Caco-2 (cell line): ENCODE measurements at regions of chr7 and their contacts with region 1.

Region 1: GRCh38 chr7:137169282-137169698 is 174.2 kb downstream of the PTN start:
- DNase-seq: peak; percentile 60 to 62
- H3K4me3 ChIP-seq: no peak overlapping the region
- H3K4me3 Mint-ChIP-seq: no peak overlapping the region
- H3K27ac Mint-ChIP-seq: no peak overlapping the region
- H3K4me1 ChIP-seq: no peaks in the 10 kb centered on the region
- H3K4me1 Mint-ChIP-seq: no peaks in the 10 kb centered on the region
- H3K27me3 ChIP-seq: no peaks in the 10 kb centered on the region
- H3K27me3 Mint-ChIP-seq: peaks cover 5% of the 10 kb centered on the region
- CTCF ChIP-seq: peak; percentile 64 to 84

Region 2: GRCh38 chr7:137120690-137121089 is 48.6 kb before region 1 on chr7:
- CTCF ChIA-PET with region 1: no interaction called
- POLR2A ChIA-PET with region 1: no interaction called
- intact Hi-C with region 1: no loop called
- DNase-seq: no peak
- H3K4me3 ChIP-seq: no peak overlapping the region
- H3K4me3 Mint-ChIP-seq: no peak overlapping the region
- H3K27ac Mint-ChIP-seq: no peak overlapping the region
- H3K4me1 ChIP-seq: no peaks in the 10 kb centered on the region
- H3K4me1 Mint-ChIP-seq: no peaks in the 10 kb centered on the region
- H3K27me3 ChIP-seq: no peaks in the 10 kb centered on the region
- H3K27me3 Mint-ChIP-seq: no peaks in the 10 kb centered on the region
- CTCF ChIP-seq: no peak

Region 3: DNA sequence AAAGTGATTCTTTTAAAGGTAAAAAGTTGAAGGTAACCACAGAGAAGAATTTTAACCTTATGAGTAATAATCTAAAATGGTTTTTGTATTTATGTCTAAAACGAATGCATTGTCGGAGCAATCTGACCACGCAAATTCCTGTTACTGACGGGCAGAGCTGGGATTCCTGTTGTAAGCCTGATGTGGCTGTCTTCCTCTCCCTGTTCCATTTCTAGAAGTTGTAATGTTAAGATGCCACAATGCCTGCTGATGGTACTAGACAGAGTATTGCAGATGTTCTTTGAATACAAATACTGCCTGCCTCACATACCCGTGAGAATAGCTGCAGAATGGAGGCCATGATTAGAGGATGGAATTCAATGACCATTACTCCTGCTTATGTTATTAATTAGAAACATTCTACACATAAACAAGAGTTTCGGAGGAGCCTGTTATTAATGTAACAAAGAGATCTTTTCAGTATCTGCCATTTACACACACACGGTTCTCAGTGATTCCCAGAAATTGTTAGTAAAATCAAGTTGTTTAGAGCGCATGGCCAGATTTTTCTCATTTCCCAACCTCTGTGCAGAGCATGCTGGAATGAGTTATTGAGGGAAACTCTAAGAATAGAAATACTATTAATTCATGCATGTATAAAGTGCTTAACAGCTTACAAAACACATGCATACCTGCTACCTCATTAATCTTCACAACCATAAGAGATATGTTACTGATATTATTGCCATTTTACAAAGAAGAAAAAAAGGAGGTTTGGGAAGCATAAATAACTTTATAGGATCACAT is 22.5 kb before region 1 on chr7:
- CTCF ChIA-PET with region 1: no interaction called
- POLR2A ChIA-PET with region 1: no interaction called
- intact Hi-C with region 1: no loop called
- DNase-seq: no peak
- H3K4me3 ChIP-seq: no peak overlapping the region
- H3K4me3 Mint-ChIP-seq: no peak overlapping the region
- H3K27ac Mint-ChIP-seq: no peak overlapping the region
- H3K4me1 ChIP-seq: no peaks in the 10 kb centered on the region
- H3K4me1 Mint-ChIP-seq: no peaks in the 10 kb centered on the region
- H3K27me3 ChIP-seq: no peaks in the 10 kb centered on the region
- H3K27me3 Mint-ChIP-seq: peaks cover 2% of the 10 kb centered on the region
- CTCF ChIP-seq: no peak

Region 4: GRCh38 chr7:137337902-137338301 is 168.6 kb after region 1 on chr7:
- CTCF ChIA-PET with region 1: interaction called, 11 read pairs
- POLR2A ChIA-PET with region 1: no interaction called
- intact Hi-C with region 1: loop called (anchors 1 kb)
- DNase-seq: peak in 1 of 2 experiments; percentile 2
- H3K4me3 ChIP-seq: no peak overlapping the region
- H3K4me3 Mint-ChIP-seq: no peak overlapping the region
- H3K27ac Mint-ChIP-seq: no peak overlapping the region
- H3K4me1 ChIP-seq: no peaks in the 10 kb centered on the region
- H3K4me1 Mint-ChIP-seq: no peaks in the 10 kb centered on the region
- H3K27me3 ChIP-seq: no peaks in the 10 kb centered on the region
- H3K27me3 Mint-ChIP-seq: peaks cover 2% of the 10 kb centered on the region
- CTCF ChIP-seq: peak; percentile 9 to 26

Region 5: DNA sequence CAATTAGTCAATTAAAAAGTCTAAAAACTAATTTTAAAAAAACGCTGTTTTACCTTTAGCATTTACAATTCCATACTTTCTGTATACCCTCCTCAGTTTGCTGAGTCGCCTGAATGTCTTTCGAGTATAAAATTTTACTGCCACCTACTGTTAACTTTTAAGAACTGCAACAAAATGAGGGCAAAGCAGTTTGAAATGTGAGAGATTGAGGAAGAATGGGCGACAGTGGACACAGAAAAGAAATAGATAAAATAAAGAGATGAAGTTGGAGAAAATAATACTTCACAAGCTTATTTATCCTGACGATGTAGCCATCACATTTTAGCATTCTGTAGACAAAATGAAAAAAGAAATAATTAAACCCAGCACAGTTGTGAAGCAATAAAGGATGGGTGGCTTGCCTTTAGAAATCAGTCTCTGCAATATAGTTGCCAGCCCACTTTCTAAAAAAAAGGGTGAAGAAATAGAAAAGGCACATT is 285.0 kb after region 1 on chr7:
- CTCF ChIA-PET with region 1: interaction called, 11 read pairs
- POLR2A ChIA-PET with region 1: no interaction called
- intact Hi-C with region 1: loop called (anchors 1 kb)
- DNase-seq: peak in 1 of 2 experiments; percentile 43
- H3K4me3 ChIP-seq: no peak overlapping the region
- H3K4me3 Mint-ChIP-seq: no peak overlapping the region
- H3K27ac Mint-ChIP-seq: no peak overlapping the region
- H3K4me1 ChIP-seq: no peaks in the 10 kb centered on the region
- H3K4me1 Mint-ChIP-seq: no peaks in the 10 kb centered on the region
- H3K27me3 ChIP-seq: no peaks in the 10 kb centered on the region
- H3K27me3 Mint-ChIP-seq: peaks cover 10% of the 10 kb centered on the region
- CTCF ChIP-seq: peak; percentile 54 to 61

Region 6: GRCh38 chr7:137592232-137592896 is 423.1 kb after region 1 on chr7:
- CTCF ChIA-PET with region 1: interaction called, 8 read pairs
- POLR2A ChIA-PET with region 1: no interaction called
- intact Hi-C with region 1: loop called (anchors 1 kb)
- DNase-seq: peak; percentile 59 to 68
- H3K4me3 ChIP-seq: no peak overlapping the region
- H3K4me3 Mint-ChIP-seq: no peak overlapping the region
- H3K27ac Mint-ChIP-seq: no peak overlapping the region
- H3K4me1 ChIP-seq: no peaks in the 10 kb centered on the region
- H3K4me1 Mint-ChIP-seq: no peaks in the 10 kb centered on the region
- H3K27me3 ChIP-seq: no peaks in the 10 kb centered on the region
- H3K27me3 Mint-ChIP-seq: peaks cover 10% of the 10 kb centered on the region
- CTCF ChIP-seq: peak; percentile 72 to 80

Region 7: GRCh38 chr7:137681657-137682562 is 512.6 kb after region 1 on chr7:
- CTCF ChIA-PET with region 1: no interaction called
- POLR2A ChIA-PET with region 1: no interaction called
- intact Hi-C with region 1: no loop called
- DNase-seq: no peak
- H3K4me3 ChIP-seq: no peak overlapping the region
- H3K4me3 Mint-ChIP-seq: no peak overlapping the region
- H3K27ac Mint-ChIP-seq: no peak overlapping the region
- H3K4me1 ChIP-seq: no peaks in the 10 kb centered on the region
- H3K4me1 Mint-ChIP-seq: no peaks in the 10 kb centered on the region
- H3K27me3 ChIP-seq: 0 out of 2 replicates have a peak, but pooled peaks cover 1% of the 10 kb centered on the region
- H3K27me3 Mint-ChIP-seq: peaks cover 23% of the 10 kb centered on the region
- CTCF ChIP-seq: no peak